ENCODE measurements at regions of chr6 and their contacts with region 1.

Region 1: GRCh38 chr6:109595998-109596397 is 95.0 kb downstream of the AK9 start:
- DNase-seq: no peak
- ATAC-seq: peak; percentile 66
- H3K4me3 ChIP-seq: no peak overlapping the region
- H3K27ac ChIP-seq: no peak overlapping the region
- H3K4me1 ChIP-seq: no peaks in the 10 kb centered on the region
- H3K27me3 ChIP-seq: no peaks in the 10 kb centered on the region
- CTCF ChIP-seq: peak; percentile 37 to 45 (median 45); a peak in 5 of 6 replicates
- EP300 ChIP-seq: no peak
- POLR2A ChIP-seq: no peak
- RAD21 ChIP-seq: peak; percentile 84

Region 2: GRCh38 chr6:109696355-109696754 is 100.4 kb after region 1 on chr6:
- CTCF ChIA-PET with region 1: interaction called, 14 read pairs
- POLR2A ChIA-PET with region 1: no interaction called
- RAD21 ChIA-PET with region 1: interaction called, 8 read pairs
- SMC1A ChIA-PET with region 1: interaction called, 4 read pairs
- in situ Hi-C with region 1: no loop called
- intact Hi-C with region 1: loop called (anchors 5 kb)
- DNase-seq: no peak
- ATAC-seq: no peak
- H3K4me3 ChIP-seq: no peak overlapping the region
- H3K27ac ChIP-seq: no peak overlapping the region
- H3K4me1 ChIP-seq: peaks cover 5% of the 10 kb centered on the region
- H3K27me3 ChIP-seq: no peaks in the 10 kb centered on the region
- CTCF ChIP-seq: no peak
- EP300 ChIP-seq: no peak
- POLR2A ChIP-seq: no peak
- RAD21 ChIP-seq: no peak

Region 3: GRCh38 chr6:109713097-109713496 is 117.1 kb after region 1 on chr6:
- CTCF ChIA-PET with region 1: no interaction called
- POLR2A ChIA-PET with region 1: no interaction called
- RAD21 ChIA-PET with region 1: no interaction called
- SMC1A ChIA-PET with region 1: no interaction called
- in situ Hi-C with region 1: no loop called
- intact Hi-C with region 1: no loop called
- DNase-seq: no peak
- ATAC-seq: no peak
- H3K4me3 ChIP-seq: no peak overlapping the region
- H3K27ac ChIP-seq: no peak overlapping the region
- H3K4me1 ChIP-seq: no peaks in the 10 kb centered on the region
- H3K27me3 ChIP-seq: no peaks in the 10 kb centered on the region
- CTCF ChIP-seq: no peak
- EP300 ChIP-seq: no peak
- POLR2A ChIP-seq: no peak
- RAD21 ChIP-seq: no peak

Region 4: DNA sequence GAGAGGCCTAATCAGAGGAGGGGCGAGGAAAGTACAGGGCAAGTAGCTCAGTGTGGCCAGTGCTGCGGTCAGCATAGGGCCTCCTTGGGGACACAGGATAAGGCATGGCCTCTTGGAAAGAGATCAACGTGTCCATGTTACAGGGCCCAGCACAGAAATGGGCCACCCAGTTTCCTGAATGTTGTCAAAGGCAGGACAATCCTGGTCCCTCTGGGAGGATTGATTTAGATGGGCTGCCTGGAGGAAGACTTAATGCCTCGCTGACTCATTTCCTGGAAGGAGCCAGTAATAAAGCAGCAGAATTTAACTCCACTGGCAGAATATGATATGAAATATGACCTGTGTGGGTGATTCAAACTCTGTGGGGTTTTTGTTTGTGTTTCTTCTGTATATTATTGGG is 802.8 kb after region 1 on chr6:
- CTCF ChIA-PET with region 1: no interaction called
- POLR2A ChIA-PET with region 1: no interaction called
- RAD21 ChIA-PET with region 1: no interaction called
- SMC1A ChIA-PET with region 1: no interaction called
- in situ Hi-C with region 1: no loop called
- intact Hi-C with region 1: loop called (anchors 10 kb)
- DNase-seq: no peak
- ATAC-seq: no peak
- H3K4me3 ChIP-seq: no peak overlapping the region
- H3K27ac ChIP-seq: no peak overlapping the region
- H3K4me1 ChIP-seq: no peaks in the 10 kb centered on the region
- H3K27me3 ChIP-seq: peaks cover 0 to 4% of the 10 kb centered on the region in 2 experiments; a peak in 2 of 4 replicates
- CTCF ChIP-seq: no peak
- EP300 ChIP-seq: no peak
- POLR2A ChIP-seq: no peak
- RAD21 ChIP-seq: no peak